ENCODE measurements at regions of chr11 and their contacts with region 1.

Region 1: DNA sequence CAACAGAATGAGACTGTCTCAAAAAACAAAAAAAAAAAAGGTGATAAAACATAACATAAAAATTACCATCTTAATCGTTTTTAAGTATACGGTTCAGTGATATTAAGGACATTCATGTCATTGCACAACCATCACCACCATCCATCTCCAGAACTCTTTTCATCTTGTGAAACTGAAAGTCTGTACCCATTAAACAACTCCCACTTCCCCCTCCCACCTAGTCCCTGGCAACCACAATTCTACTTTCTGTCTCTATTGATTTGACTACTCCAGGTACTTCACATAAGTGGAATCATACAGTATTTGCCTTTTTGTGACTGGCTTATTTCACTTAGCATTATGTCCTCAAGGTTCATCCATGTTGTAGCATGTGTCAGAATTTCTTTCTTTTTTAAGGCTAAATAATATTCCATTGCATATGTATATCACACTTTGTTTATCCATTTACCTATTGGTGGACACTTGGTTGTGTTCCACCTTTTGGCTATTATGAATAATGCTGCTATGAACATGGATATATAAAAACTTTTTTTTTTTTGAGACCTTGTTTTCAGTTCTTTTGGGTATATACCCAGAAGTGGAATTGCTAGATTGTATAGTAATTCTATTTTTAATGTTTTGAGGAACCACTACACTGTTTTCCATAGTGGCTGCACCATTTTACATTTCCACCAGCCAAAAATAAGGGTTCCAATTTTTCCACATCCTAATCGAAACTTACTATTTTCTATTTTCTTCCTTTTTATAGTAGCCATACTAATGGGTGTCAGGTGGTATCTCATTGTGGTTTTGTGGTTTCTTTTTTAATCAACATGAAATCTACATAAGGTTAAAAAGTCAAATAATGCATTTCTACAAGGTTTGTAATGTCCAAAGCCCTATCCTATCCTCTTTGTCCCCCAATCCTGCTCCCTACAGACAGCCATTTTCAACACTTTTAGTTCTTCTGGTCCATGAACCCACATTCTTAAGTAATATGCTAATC is 23.4 kb upstream of the PIK3C2A start:
- DNase-seq: no peak
- ATAC-seq: no peak
- H3K4me3 ChIP-seq: no peak overlapping the region
- H3K27ac ChIP-seq: no peak overlapping the region
- H3K4me1 ChIP-seq: no peaks in the 10 kb centered on the region
- H3K27me3 ChIP-seq: no peaks in the 10 kb centered on the region
- CTCF ChIP-seq: no peak

Region 2: DNA sequence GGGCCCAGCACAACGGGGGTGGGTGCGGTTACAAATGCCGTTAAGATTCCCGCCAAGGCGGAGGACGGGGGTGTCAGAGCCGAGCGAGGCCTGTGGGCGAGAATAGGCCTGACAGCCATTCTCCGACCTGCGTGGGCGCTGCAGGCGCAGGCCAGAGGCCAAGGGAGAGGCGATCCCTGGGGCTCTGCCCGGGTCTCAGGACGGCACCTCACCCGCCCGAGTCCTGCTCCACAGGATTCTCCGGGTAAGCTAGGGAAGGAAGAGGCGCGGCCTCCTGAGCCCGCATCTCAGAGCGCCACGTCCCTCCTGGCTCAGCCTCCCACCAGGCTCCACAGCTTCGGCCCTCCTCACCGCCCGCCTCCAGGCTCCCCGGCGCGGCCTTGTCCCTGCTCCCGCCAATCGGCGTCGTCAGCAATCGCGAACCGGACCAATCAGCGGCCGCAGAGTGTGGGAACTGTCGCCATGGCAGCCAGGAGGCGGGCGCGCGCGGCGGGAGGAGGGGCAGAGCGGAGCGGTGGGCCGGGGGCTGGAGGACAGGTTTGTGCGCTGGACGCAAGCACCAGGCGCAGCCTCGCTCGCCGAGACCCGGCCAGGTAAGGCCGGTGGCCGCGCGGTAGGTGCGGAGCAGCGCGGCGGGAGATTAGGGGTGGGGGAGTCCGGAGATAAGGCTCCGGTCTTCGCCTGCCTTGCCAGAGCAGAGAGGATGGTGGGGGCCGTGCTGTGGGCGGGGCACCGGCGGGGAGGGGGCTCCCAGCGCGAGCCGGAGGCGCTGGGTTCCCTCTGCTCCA is 45.3 kb after region 1 on chr11 and contains the start of gene NUCB2:
- intact Hi-C with region 1: loop called in 1 of 2 experiments (anchors 5 kb)
- DNase-seq: peak; percentile 97 to 98
- ATAC-seq: peak; percentile 99
- H3K4me3 ChIP-seq: peak within 1 kb of the TSS; percentile 97
- H3K27ac ChIP-seq: peak within 1 kb of the TSS; percentile 89
- H3K4me1 ChIP-seq: no peaks in the 10 kb centered on the region
- H3K27me3 ChIP-seq: no peaks in the 10 kb centered on the region
- CTCF ChIP-seq: no peak
- total RNA-seq, gene NUCB2: 20.4 to 42.3 (median 26.8) TPM

Region 3: DNA sequence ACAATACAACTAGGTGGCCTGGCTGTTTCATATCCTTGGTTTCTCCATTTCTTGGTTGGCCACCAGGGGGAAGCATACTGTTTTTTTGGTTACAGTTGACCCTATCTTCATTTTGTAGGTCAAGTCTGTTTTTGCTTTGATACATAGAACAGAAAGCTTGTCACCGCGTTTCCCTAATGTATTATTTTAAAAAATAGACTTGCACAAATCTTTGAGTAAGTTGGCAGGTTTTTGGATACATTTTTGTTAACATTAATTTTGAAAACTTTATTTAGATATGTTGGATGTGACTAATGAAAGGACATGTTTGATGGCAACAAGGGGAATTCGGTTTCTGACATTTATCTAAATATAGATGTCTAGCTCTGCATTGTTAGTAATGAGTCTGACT is 123.4 kb after region 1 on chr11:
- intact Hi-C with region 1: loop called in 1 of 2 experiments (anchors 10 kb)
- DNase-seq: no peak
- ATAC-seq: peak; percentile 56 to 77 (median 66)
- H3K4me3 ChIP-seq: no peak overlapping the region
- H3K27ac ChIP-seq: no peak overlapping the region
- H3K4me1 ChIP-seq: peaks cover 22% of the 10 kb centered on the region
- H3K27me3 ChIP-seq: peaks cover 0 to 38% (median 5%) of the 10 kb centered on the region in 3 donors
- CTCF ChIP-seq: peak; percentile 73

Region 4: GRCh38 chr11:17504330-17505107 is 273.4 kb after region 1 on chr11:
- intact Hi-C with region 1: loop called (anchors 2 kb)
- DNase-seq: peak; percentile 82 to 94
- ATAC-seq: peak; percentile 88 to 97 (median 90)
- H3K4me3 ChIP-seq: no peak overlapping the region
- H3K27ac ChIP-seq: peak overlapping the region; percentile 18
- H3K4me1 ChIP-seq: no peaks in the 10 kb centered on the region
- H3K27me3 ChIP-seq: no peaks in the 10 kb centered on the region
- CTCF ChIP-seq: peak; percentile 96

Region 5: DNA sequence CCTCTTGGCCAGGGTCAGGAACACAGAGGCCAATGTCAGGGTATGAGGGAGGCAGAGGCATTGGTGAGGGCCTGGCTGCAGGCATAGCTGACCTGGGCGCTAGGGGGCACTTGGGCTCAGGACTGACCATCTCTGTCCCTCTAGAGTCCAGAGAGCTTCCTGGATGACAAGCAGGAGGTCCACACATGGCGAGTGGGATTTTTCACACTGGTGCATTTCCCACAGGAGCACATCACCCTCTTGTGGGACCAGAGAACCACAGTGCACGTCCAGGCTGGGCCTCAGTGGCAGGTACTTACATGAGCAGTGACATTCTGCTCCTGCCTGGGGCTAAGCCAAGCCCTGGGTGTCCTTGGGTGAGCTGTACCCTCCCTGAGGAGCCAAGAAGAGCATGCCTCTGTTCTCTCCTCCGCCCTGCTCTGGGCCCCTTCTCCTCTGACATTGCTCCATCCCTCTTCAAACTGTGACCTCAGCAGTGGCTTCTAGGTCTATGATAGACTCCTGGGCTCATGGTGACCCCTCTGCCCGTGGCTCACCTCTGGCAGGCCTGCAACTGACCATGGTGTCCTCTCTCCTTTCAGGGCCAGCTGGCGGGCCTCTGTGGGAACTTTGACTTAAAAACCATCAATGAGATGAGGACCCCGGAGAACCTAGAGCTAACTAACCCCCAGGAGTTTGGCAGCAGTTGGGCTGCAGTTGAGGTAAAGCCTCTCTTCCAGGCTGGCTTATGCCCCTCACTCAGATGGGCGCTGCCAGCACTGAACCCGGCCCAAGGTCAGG is 362.5 kb after region 1 on chr11:
- intact Hi-C with region 1: no loop called
- DNase-seq: no peak
- ATAC-seq: no peak
- H3K4me3 ChIP-seq: no peak overlapping the region
- H3K27ac ChIP-seq: no peak overlapping the region
- H3K4me1 ChIP-seq: no peaks in the 10 kb centered on the region
- H3K27me3 ChIP-seq: peaks cover 0 to 10% (median 0%) of the 10 kb centered on the region in 3 donors
- CTCF ChIP-seq: no peak

Measured in psoas muscle (tissue), 8 donors.